T-cell (primary cell): ENCODE measurements at regions of chr17 and their contacts with region 1.

Region 1: DNA sequence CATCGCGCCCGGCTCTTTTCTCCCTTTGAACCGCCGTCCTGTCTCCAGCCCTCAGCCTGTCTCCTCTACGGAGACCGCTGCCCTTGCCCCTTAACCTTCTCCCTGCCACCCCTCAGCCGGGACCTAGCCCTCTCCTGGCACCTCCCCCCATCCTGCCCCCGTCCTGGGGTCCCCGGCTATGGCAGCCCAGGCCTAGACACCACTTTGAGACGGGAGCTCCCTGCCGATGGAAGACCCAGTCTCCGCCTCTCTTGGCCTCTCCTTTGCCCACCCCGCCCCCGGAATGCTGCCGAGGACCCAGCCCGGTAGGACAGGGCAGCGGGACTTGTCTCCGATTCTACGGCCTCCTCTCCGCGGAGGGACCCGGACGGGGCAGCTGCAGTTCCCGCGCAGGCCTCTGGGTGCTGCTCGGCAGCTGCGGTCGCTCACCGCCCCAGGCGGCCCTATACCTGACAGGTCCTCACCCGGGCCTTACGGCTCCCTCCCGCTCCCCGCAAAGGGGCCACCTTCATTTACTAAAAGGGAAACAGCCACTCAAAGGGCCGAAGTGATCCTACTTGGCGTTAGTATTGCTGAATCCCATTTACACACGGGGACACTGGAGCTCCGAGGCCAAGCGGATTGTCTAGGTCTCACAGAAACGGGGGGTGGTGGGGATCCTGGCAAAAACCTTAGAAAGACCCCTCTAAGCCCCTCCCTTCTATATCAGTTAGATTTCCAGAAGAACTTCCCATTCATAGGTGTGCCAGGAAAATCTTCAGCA is 32.6 kb upstream of the TAC4 start:
- DNase-seq: peak; percentile 12 to 77 (median 60)
- ATAC-seq: peak; percentile 94 to 97 (median 96)
- H3K4me3 ChIP-seq: no peak overlapping the region
- H3K4me3 Mint-ChIP-seq: peak overlapping the region; percentile 9 to 58 (median 47)
- H3K27ac ChIP-seq: no peak overlapping the region
- H3K27ac Mint-ChIP-seq: no peak overlapping the region
- H3K4me1 ChIP-seq: peaks cover 0 to 11% of the 10 kb centered on the region in 2 experiments
- H3K4me1 Mint-ChIP-seq: peaks cover 4 to 8% (median 7%) of the 10 kb centered on the region in 3 donors
- H3K27me3 ChIP-seq: peaks cover 15 to 60% of the 10 kb centered on the region in 2 experiments
- H3K27me3 Mint-ChIP-seq: peaks cover 35 to 60% of the 10 kb centered on the region in 2 donors

Region 2: DNA sequence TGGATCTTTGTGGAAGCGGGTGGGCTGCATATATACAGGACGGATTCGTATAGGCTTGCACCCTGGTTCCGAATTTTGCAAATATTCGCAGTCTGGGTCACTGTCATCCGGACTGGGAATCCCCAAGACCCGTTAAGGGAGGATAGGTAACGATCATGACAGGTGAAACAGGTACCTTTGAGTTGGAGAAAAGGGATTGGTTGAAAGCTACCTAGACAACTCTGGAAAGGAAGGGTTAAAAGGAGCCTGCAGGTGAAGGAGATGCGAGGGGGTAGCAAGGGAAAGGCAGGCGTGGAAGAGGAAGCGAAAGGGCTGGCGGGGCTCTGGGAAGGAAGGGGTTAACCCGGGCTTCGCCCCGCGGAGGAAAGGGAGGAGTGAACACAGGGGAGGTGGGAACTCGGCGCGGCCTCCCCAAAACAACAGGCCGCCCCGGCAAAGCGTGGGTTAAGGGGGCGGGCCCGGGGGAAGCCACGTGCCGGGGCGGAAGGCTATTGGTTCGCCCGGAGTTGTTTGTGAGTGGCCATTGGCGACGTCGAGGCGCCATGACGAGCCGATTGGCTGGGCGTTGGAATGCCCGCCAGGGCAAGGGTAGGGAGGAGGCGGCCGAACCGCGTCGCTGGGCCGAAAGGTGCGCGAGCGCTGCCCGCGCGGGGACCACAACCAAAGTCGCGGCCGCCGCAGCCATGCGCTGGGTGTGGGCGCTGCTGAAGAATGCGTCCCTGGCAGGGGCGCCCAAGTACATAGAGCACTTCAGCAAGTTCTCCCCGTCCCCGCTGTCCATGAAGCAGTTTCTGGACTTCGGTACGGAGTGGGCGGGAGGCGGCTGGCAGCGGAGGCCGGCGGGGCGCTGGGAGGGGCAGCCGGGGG is 214.5 kb after region 1 on chr17 and contains the start of gene PDK2:
- CTCF ChIA-PET with region 1: interaction called in 1 of 2 experiments, 10 read pairs
- POLR2A ChIA-PET with region 1: interaction called in 1 of 2 experiments, 4 read pairs
- DNase-seq: peak; percentile 93 to 98 (median 96)
- ATAC-seq: peak; percentile 89 to 96 (median 91)
- H3K4me3 ChIP-seq: peak within 1 kb of the TSS; percentile 59 to 82
- H3K4me3 Mint-ChIP-seq: peak within 1 kb of the TSS; percentile 95 to 97 (median 95)
- H3K27ac ChIP-seq: peak within 1 kb of the TSS; percentile 58
- H3K27ac Mint-ChIP-seq: peak within 1 kb of the TSS; percentile 96
- H3K4me1 ChIP-seq: peaks cover 5 to 29% of the 10 kb centered on the region in 2 experiments
- H3K4me1 Mint-ChIP-seq: peaks cover 35 to 58% (median 36%) of the 10 kb centered on the region in 3 donors
- H3K27me3 ChIP-seq: peaks cover 0 to 5% of the 10 kb centered on the region in 2 experiments
- H3K27me3 Mint-ChIP-seq: no peaks in the 10 kb centered on the region
- total RNA-seq, gene PDK2: 18.8 to 37.2 (median 30.0) TPM